ENCODE measurements at regions of chr5 and their contacts with region 1.

Region 1: DNA sequence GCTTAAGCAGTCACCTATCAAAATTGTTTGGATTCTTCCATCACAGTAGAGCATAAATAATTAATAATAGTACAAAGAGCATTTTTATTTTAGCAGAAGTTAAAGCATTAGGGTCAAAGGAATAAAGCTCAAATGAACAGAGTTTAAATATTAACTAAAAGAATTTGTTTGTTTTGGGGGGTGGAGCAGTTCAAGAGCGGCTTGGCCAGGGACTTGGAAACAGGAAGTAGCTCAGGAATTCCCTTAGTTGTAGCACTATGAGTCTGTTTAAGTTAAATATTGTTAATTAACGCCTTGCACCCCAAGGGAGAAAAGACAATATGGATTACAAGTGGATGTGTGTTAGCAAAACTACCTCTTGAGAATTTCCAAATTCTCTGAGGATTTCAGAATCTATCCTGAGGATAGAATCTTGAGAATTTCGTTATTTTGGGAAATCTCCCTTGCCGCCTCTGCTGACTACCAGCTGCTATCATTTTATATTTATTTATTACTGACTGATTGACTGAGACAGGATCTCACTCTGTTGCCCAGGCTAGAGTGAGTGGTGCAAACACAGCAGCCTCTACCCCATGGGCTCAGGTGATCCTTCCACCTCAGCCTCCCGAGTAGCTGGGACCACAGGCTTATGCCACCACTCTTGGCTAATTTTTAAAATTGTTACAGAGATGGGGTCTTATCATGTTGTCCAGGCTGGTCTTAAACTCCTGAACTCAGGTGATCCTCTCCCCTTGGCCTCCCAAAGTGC is 96.7 kb upstream of the CHD1 start:
- DNase-seq: no peak
- H3K4me3 Mint-ChIP-seq: no peak overlapping the region
- H3K27ac Mint-ChIP-seq: no peak overlapping the region
- H3K4me1 Mint-ChIP-seq: peaks cover 27% of the 10 kb centered on the region
- H3K27me3 Mint-ChIP-seq: no peaks in the 10 kb centered on the region

Region 2: DNA sequence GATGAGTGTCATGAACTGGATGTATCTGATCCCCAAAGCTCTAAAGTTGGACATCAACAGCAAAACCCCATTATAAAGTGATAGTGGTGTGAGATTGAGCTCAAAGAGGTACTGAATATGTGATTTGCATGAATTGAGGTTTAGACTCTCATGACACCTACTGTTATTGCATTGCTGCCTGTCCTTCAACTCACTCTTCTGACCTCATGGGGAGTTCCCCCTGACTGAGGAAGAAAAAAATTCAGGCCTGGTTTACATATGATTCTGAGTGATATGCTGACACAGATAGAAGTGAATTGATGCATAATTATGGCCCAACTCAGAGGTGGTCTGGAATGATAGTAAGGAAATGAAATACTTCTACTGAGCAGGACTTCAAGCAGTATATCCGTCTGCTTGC is 20.5 kb before region 1 on chr5:
- intact Hi-C with region 1: loop called (anchors 2 kb)
- DNase-seq: peak; percentile 63
- H3K4me3 Mint-ChIP-seq: no peak overlapping the region
- H3K27ac Mint-ChIP-seq: no peak overlapping the region
- H3K4me1 Mint-ChIP-seq: peaks cover 9% of the 10 kb centered on the region
- H3K27me3 Mint-ChIP-seq: peaks cover 4% of the 10 kb centered on the region

Region 3: GRCh38 chr5:99060306-99061261 is 35.1 kb after region 1 on chr5:
- intact Hi-C with region 1: no loop called
- DNase-seq: peak; percentile 95
- H3K4me3 Mint-ChIP-seq: no peak overlapping the region
- H3K27ac Mint-ChIP-seq: no peak overlapping the region
- H3K4me1 Mint-ChIP-seq: peaks cover 1% of the 10 kb centered on the region
- H3K27me3 Mint-ChIP-seq: peaks cover 17% of the 10 kb centered on the region